Left cardiac atrium (tissue), 4 donors: ENCODE measurements at regions of chr7 and their contacts with region 1.

Region 1: GRCh38 chr7:141541375-141541774 is 9.8 kb upstream of the AGK start:
- DNase-seq: no peak
- ATAC-seq: peak in 1 of 2 donors; percentile 31

Region 2: DNA sequence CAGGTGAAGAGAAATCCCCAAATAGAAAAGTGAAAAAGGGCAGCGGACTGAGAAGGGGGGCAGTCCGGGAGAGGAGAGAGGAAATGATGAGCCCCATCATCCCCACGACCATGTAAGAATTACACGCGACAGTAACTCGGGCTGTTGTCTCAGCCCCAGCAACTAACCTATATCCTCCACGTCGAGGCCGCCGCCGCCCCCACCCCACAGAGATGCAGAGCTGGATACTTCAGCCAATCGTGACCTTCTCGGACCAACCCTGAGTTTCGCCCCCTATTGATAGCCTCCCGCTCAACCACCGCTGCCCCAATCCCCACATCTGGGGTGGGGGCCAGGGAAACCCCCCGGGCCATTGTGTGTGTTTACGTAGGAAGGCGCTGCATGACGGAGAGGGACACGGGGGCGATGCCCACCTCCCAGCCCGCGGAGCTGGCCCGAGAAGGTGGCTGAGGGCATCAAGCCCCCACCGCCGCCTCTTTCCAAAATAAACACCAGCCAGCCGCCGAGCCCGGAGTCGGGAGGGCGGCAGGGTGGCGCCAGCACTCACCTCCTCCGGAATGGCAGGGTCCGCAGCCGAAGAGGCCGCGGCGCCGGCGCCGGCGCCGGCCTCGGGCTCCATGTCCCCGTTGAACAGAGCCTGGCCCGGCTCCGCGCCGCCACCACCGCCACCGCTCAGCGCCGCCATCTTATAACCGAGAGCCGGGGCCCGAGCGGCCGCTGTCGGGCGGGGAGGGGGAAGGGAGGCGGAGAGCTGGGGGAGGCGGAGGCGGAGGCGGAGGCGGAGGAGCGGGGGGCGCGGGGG is 617.2 kb before region 1 on chr7:
- intact Hi-C with region 1: loop called in 1 of 2 experiments (anchors 10 kb)
- DNase-seq: peak; percentile 83
- ATAC-seq: peak; percentile 84 to 90

Region 3: DNA sequence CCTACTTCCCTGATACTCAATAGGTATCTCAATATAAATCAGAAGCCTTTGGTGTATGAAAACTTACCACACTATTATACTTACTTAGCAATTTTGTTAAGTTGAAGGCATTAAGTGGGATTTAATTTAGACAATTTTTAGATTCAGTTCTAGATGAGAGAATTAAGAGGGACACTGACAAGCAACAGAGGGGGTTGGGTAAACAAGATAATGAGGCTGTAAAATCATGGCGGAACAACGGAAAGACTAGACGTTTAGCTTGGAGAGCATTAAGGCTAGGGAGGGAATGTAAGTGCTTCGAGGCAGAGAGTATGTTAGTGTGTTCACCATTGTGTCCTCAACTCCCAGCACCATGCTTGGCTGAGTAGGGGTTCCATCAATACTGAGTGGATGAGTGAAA is 89.2 kb after region 1 on chr7:
- intact Hi-C with region 1: loop called in 1 of 2 experiments (anchors 10 kb)
- DNase-seq: no peak
- ATAC-seq: no peak

Region 4: GRCh38 chr7:141649865-141650634 is 108.7 kb after region 1 on chr7:
- intact Hi-C with region 1: loop called in 1 of 2 experiments (anchors 5 kb)
- DNase-seq: peak; percentile 63
- ATAC-seq: peak; percentile 92 to 94